Right ventricle myocardium superior (tissue), 1 donor: ENCODE measurements at regions of chr6 and their contacts with region 1.

Region 1: GRCh38 chr6:143575440-143575839 is 63.9 kb upstream of the FUCA2 start:
- DNase-seq: no peak
- ATAC-seq: peak; percentile 93

Region 2: GRCh38 chr6:143842902-143843676 is 267.6 kb after region 1 on chr6 and contains the start of gene LTV1:
- intact Hi-C with region 1: loop called (anchors 5 kb)
- DNase-seq: peak; percentile 98
- ATAC-seq: peak; percentile 100
- total RNA-seq, gene LTV1: 12.2 TPM

Region 3: DNA sequence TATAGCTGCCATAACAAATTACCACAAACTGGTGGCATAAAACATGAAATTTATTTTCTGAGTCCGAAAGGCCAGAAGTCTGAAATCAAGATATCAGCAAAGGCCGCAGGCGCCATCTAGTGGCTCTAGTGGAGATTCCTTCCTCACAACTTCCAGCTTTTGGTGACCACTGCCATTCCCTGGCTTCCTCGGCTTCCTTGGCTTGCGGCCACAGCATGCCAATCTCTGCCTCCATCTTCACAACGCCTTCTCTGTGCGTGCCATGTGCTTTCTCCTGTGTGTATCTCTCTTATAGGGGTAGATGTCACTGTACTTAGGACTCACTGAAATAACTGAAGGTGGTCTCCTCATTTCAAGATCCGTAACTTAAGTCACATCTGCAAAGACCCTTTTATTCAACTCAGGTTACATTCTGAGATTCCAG is 438.1 kb after region 1 on chr6:
- intact Hi-C with region 1: loop called (anchors 2 kb)
- DNase-seq: peak; percentile 85
- ATAC-seq: peak; percentile 68